HepG2 (cell line): ENCODE measurements at regions of chr16 and their contacts with region 1.

Region 1: DNA sequence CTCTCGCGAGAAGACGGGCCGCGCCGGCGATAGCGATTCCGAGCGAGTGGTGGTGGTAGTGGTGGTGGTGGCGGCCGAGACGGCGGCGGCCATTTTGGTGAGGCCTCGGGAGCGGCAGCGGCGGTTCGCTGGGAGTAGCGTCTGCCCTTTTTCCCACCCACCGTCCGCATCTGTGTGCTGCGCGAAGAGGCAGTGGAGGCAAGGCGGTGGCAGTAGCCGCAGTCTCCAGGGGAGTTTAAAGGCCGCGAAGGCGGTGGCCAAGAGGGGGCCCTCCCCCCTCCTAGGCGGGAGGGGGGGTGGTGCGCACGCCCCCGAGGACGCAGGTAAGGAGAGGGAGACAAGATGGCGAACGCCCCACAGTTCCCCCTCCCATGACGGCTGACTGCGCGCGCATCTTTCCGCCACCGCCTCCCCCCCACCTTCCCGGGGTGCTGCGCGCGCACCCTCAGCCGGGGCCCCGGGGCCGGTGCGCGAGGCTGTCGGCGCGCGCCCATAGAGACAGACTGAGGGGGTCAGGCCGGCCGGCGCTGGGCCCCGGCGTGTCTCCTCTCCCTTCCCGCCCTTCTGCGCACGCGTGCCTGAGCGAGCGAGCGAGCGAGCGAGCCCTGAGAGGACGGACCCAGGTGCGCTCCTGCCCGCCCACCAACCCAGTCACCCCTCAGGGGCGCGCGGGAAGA is 694 bp upstream of the SRCAP start:
- DNase-seq: peak; percentile 97
- ATAC-seq: peak; percentile 77
- H3K4me3 ChIP-seq: peak overlapping the region; percentile 75 to 96 (median 93)
- H3K27ac ChIP-seq: peak overlapping the region; percentile 99
- H3K4me1 ChIP-seq: peaks cover 33% of the 10 kb centered on the region
- H3K27me3 ChIP-seq: no peaks in the 10 kb centered on the region
- CTCF ChIP-seq: peak; percentile 48
- EP300 ChIP-seq: 0 out of 4 replicates have a peak, but pooled peaks have one; percentile 20 to 32
- POLR2A ChIP-seq: peak; percentile 94 to 97
- RAD21 ChIP-seq: peak; percentile 74

Region 2: GRCh38 chr16:30526823-30527635 is 171.2 kb before region 1 on chr16:
- CTCF ChIA-PET with region 1: no interaction called
- POLR2A ChIA-PET with region 1: no interaction called
- in situ Hi-C with region 1: no loop called
- intact Hi-C with region 1: loop called (anchors 5 kb)
- DNase-seq: peak; percentile 97
- ATAC-seq: peak; percentile 89
- H3K4me3 ChIP-seq: peak overlapping the region; percentile 78 to 97 (median 87)
- H3K27ac ChIP-seq: peak overlapping the region; percentile 98
- H3K4me1 ChIP-seq: peaks cover 61% of the 10 kb centered on the region
- H3K27me3 ChIP-seq: no peaks in the 10 kb centered on the region; a peak in 1 of 5 replicates
- CTCF ChIP-seq: peak; percentile 54
- EP300 ChIP-seq: peak in 1 of 2 experiments; percentile 31; a peak in 1 of 4 replicates
- POLR2A ChIP-seq: peak; percentile 70 to 76
- RAD21 ChIP-seq: peak; percentile 75

Region 3: DNA sequence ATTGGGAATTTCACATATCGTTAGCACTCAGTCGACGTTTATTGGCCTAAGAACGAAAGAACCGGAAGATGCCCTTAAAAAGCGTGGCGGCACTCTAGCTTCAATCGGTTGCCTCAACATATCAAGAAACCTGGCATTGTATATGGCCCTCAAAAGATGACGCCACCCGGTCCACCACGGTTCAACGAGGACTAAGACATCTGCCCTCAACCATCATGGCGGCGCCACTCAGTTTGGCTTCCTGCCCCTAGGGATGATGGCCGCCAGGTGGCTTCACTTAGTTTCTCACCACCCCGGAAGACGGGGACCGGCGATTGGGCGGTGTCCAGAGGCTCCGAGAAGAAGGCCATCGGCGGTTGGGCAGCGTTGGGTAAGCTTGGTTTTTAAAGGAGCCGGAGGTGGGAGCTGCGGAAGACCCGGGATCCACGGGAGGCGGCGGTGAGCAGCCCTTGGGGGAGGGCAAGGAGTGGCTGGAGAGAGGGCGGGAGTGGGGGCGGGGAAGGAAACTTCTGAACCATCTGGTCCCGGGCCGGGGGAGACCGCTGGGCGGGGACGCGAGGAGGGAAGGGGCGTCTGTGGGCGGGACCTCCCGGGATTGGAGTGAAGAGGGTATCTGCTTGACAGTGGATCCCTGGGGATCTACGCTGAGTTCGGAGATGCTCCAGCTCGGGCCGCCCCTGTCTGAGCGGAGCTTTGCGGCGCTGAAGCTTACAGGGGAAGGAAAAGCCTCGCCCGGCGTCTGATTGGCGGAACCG is 47.7 kb before region 1 on chr16 and contains the start of gene PRR14:
- CTCF ChIA-PET with region 1: no interaction called
- POLR2A ChIA-PET with region 1: no interaction called
- in situ Hi-C with region 1: no loop called
- intact Hi-C with region 1: loop called (anchors 2 kb)
- DNase-seq: peak; percentile 99
- ATAC-seq: peak; percentile 87
- H3K4me3 ChIP-seq: peak within 1 kb of the TSS; percentile 79 to 100 (median 95)
- H3K27ac ChIP-seq: peak within 1 kb of the TSS; percentile 88
- H3K4me1 ChIP-seq: peaks cover 18% of the 10 kb centered on the region
- H3K27me3 ChIP-seq: no peaks in the 10 kb centered on the region; a peak in 1 of 5 replicates
- CTCF ChIP-seq: peak; percentile 49; the same call in 1 of the 2 replicates
- EP300 ChIP-seq: no peak
- POLR2A ChIP-seq: peak in 1 of 2 experiments; percentile 59; a peak in 2 of 4 replicates
- RAD21 ChIP-seq: peak; percentile 46; the same call in 1 of the 2 replicates
- total RNA-seq, gene PRR14: 9.1 and 11.0 TPM in 2 replicates

Region 4: GRCh38 chr16:30657866-30658730 is 40.2 kb before region 1 on chr16 and contains the start of gene FBRS:
- CTCF ChIA-PET with region 1: interaction called, 3 read pairs
- POLR2A ChIA-PET with region 1: interaction called, 15 read pairs
- in situ Hi-C with region 1: no loop called
- intact Hi-C with region 1: loop called (anchors 1 kb)
- DNase-seq: peak; percentile 100
- ATAC-seq: peak; percentile 85
- H3K4me3 ChIP-seq: peak within 1 kb of the TSS; percentile 78 to 89 (median 82)
- H3K27ac ChIP-seq: peak within 1 kb of the TSS; percentile 93
- H3K4me1 ChIP-seq: peaks cover 36% of the 10 kb centered on the region
- H3K27me3 ChIP-seq: no peaks in the 10 kb centered on the region; a peak in 1 of 5 replicates
- CTCF ChIP-seq: peak; percentile 97
- EP300 ChIP-seq: peak in 1 of 2 experiments; percentile 22; a peak in 2 of 4 replicates
- POLR2A ChIP-seq: peak; percentile 76 to 86
- RAD21 ChIP-seq: peak; percentile 97
- total RNA-seq, gene FBRS: 10.1 and 16.2 TPM in 2 replicates

Region 5: GRCh38 chr16:30724641-30725417 is 26.6 kb after region 1 on chr16:
- CTCF ChIA-PET with region 1: no interaction called
- POLR2A ChIA-PET with region 1: no interaction called
- in situ Hi-C with region 1: no loop called
- intact Hi-C with region 1: no loop called
- DNase-seq: no peak
- ATAC-seq: peak; percentile 34
- H3K4me3 ChIP-seq: no peak overlapping the region
- H3K27ac ChIP-seq: no peak overlapping the region
- H3K4me1 ChIP-seq: no peaks in the 10 kb centered on the region
- H3K27me3 ChIP-seq: no peaks in the 10 kb centered on the region
- CTCF ChIP-seq: no peak
- EP300 ChIP-seq: no peak
- POLR2A ChIP-seq: no peak
- RAD21 ChIP-seq: no peak

Region 6: DNA sequence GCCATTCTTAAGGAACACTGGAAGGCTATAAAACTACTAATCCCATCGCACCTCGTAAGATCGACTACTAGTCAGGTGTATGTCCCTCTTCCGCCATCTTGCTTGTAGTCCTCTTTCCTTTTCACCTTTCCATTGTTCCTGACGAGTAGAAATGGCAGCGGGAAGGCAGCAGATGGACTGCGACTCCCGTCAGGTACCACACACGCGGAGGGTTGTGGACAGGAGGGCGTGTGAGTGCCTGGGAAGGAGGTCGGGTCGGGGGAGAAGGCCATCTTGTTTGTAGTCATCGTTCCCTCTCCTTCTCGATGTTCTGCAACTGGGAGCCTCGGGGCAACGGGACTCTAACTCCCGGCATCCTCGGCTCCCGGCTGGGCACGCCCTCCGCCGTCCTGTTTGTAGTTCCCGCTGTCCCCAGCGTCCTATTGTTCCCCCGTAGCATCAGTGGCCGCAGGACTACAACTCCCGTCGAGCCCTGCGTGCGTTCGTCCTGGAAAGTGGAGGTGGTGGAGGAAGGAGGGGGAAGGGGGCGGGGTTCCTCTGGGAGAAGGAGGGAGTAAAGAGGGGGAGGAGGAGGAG is 224.8 kb after region 1 on chr16:
- CTCF ChIA-PET with region 1: no interaction called
- POLR2A ChIA-PET with region 1: no interaction called
- in situ Hi-C with region 1: no loop called
- intact Hi-C with region 1: loop called (anchors 10 kb)
- DNase-seq: peak; percentile 99
- ATAC-seq: peak; percentile 84
- H3K4me3 ChIP-seq: peak overlapping the region; percentile 65 to 87 (median 76)
- H3K27ac ChIP-seq: peak overlapping the region; percentile 87
- H3K4me1 ChIP-seq: peaks cover 19% of the 10 kb centered on the region
- H3K27me3 ChIP-seq: no peaks in the 10 kb centered on the region; a peak in 1 of 5 replicates
- CTCF ChIP-seq: peak; percentile 10; the same call in 1 of the 2 replicates
- EP300 ChIP-seq: no peak
- POLR2A ChIP-seq: peak; percentile 66 to 86
- RAD21 ChIP-seq: no peak; the same call in 1 of the 2 replicates